ENCODE measurements at regions of chr22 and their contacts with region 1.

Region 1: DNA sequence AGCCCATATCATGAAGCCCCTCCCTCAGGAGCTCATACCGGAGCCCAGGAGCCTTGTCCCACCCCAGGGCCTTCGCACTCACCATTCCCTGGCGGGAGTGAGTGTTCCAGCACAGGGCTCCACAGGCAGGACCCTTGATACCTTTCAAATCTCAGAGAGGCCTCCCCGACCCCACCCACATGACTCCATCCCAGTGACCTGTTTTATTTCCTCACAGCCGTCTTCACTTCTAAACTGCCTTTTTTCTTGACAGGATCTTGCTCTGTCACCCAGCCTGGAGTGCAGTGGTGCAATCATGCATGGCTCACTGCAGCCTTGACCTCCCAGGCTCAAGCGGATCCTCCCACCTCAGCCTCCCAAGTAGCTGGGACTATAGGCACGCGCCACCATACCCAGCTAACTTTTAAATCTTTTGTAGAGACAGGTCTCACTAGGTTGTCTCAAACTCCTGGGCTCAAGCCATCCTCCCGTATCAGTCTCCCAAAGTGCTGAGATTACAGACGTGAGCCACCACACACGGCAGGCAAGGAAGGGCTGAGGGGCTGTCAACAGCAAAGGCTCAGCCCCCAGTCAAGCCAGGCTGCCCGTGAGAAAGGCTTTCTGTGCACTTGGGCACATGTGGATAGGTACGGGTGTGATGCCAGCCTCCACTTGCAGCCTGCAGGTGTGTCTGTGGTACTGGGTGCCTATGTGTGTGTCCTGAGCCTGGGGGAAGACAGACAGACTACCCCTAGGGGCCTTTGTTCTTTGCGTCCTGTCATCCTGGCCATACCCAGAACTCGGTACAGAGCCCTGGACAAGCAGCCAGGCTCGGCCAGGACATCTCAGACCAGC is 9.3 kb downstream of the RPL3 start:
- DNase-seq: peak in 1 of 2 donors; percentile 23
- H3K4me3 ChIP-seq: no peak overlapping the region
- H3K27ac ChIP-seq: peak overlapping the region; percentile 80 to 90
- H3K4me1 ChIP-seq: peaks cover 0 to 10% of the 10 kb centered on the region in 2 donors
- H3K27me3 ChIP-seq: no peaks in the 10 kb centered on the region
- CTCF ChIP-seq: no peak
- POLR2A ChIP-seq: no peak

Region 2: GRCh38 chr22:39170825-39171622 is 139.1 kb before region 1 on chr22:
- intact Hi-C with region 1: loop called (anchors 2 kb)
- DNase-seq: peak; percentile 64 to 84
- H3K4me3 ChIP-seq: peak overlapping the region in 1 of 3 donors; percentile 41
- H3K27ac ChIP-seq: no peak overlapping the region
- H3K4me1 ChIP-seq: peaks cover 21 to 25% of the 10 kb centered on the region in 2 donors
- H3K27me3 ChIP-seq: no peaks in the 10 kb centered on the region
- CTCF ChIP-seq: peak; percentile 96 to 98 (median 97)
- POLR2A ChIP-seq: no peak